Psoas muscle (tissue), 8 donors: ENCODE measurements at regions of chr16 and their contacts with region 1.

Region 1: GRCh38 chr16:78556421-78556820 is 457.0 kb downstream of the WWOX start:
- DNase-seq: no peak
- ATAC-seq: no peak
- H3K4me3 ChIP-seq: no peak overlapping the region
- H3K27ac ChIP-seq: no peak overlapping the region
- H3K4me1 ChIP-seq: no peaks in the 10 kb centered on the region
- H3K27me3 ChIP-seq: peaks cover 0 to 2% (median 0%) of the 10 kb centered on the region in 3 donors
- CTCF ChIP-seq: no peak

Region 2: DNA sequence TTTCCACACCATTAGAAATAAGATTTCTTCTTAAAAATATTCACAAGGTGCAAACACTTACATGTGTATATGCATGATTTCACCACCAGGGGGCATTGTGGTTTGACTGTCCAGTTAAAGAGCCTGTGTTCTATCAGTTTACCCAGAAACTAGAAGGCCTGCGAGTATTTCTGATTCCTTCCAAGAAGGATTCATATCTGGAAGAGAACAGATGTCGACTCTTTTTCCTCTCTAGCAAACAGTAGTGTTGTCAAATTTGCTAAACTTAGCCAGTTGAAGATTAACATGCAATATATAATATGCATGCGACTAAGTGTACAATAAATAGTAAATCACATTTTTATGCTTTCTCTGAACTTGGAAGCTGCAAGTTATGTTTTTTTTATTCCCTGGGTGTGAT is 52.8 kb before region 1 on chr16:
- intact Hi-C with region 1: no loop called
- DNase-seq: no peak
- ATAC-seq: peak; percentile 48 to 69 (median 54)
- H3K4me3 ChIP-seq: no peak overlapping the region
- H3K27ac ChIP-seq: no peak overlapping the region
- H3K4me1 ChIP-seq: peaks cover 23% of the 10 kb centered on the region
- H3K27me3 ChIP-seq: no peaks in the 10 kb centered on the region
- CTCF ChIP-seq: peak; percentile 96

Region 3: DNA sequence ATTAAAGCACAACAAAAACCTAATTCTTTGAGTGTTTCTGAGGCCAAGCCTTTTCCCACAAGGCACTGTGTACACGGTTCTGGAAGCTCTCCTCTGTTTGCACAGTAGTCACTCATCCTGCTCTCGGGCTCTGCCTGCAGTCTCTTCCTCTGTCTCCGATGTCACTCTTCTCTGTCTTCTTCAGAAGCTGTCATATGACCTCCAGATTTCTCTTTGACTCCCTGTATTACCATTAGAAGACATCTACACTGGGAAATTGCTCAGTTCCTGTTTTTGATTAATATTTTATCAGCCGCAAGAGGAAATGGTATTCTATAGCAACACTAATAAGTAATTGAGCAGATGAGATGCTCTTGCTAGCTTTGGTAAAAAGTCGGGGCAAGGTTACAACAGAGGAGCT is 34.1 kb before region 1 on chr16:
- intact Hi-C with region 1: loop called in 1 of 2 experiments (anchors 5 kb)
- DNase-seq: no peak
- ATAC-seq: no peak
- H3K4me3 ChIP-seq: no peak overlapping the region
- H3K27ac ChIP-seq: no peak overlapping the region
- H3K4me1 ChIP-seq: no peaks in the 10 kb centered on the region
- H3K27me3 ChIP-seq: no peaks in the 10 kb centered on the region
- CTCF ChIP-seq: no peak